WTC11 (cell line): ENCODE measurements at regions of chr16 and their contacts with region 1.

Region 1: DNA sequence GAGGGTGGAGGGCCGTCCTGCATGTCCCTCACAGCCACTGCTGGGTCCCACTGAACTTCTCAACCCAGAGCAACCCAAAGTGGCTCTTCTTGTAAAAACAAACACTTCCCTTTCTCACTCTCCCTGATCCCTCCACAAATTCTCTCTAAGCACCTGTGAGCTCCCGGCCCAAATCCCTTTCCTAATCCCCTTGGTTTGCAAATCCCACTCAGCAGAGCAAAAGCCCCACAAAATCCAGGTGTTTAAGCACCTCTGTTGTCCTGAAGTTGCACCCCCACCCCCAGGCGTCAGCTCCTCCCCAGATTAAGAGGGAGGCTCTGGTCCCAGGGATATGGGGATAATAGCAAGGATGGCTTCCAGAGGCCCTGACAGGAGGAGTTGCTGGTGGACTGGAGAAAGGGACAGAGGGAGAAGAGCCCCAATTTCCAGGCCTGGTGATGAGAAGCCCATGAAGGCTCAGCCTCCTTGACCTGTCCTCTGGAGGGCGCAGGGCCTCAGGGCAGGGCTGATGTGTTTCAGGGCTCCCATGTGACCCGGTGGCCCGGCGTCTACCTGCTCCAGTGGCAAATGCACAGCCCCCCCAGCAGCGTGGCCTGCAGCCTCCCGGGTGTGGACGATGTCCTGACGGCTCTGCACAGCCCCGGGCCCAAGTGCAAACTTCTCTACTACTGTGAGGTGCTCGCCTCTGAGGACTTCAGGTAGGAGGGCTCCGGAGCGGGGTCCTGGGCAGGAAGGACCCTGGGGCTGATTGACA is 23.0 kb downstream of the NAGPA start:
- DNase-seq: peak; percentile 36
- ATAC-seq: peak; percentile 84
- H3K4me3 Mint-ChIP-seq: no peak overlapping the region
- H3K27ac Mint-ChIP-seq: no peak overlapping the region
- H3K4me1 Mint-ChIP-seq: no peaks in the 10 kb centered on the region
- H3K27me3 Mint-ChIP-seq: no peaks in the 10 kb centered on the region; the same call in 1 of the 2 replicates
- CTCF ChIP-seq: no peak

Region 2: DNA sequence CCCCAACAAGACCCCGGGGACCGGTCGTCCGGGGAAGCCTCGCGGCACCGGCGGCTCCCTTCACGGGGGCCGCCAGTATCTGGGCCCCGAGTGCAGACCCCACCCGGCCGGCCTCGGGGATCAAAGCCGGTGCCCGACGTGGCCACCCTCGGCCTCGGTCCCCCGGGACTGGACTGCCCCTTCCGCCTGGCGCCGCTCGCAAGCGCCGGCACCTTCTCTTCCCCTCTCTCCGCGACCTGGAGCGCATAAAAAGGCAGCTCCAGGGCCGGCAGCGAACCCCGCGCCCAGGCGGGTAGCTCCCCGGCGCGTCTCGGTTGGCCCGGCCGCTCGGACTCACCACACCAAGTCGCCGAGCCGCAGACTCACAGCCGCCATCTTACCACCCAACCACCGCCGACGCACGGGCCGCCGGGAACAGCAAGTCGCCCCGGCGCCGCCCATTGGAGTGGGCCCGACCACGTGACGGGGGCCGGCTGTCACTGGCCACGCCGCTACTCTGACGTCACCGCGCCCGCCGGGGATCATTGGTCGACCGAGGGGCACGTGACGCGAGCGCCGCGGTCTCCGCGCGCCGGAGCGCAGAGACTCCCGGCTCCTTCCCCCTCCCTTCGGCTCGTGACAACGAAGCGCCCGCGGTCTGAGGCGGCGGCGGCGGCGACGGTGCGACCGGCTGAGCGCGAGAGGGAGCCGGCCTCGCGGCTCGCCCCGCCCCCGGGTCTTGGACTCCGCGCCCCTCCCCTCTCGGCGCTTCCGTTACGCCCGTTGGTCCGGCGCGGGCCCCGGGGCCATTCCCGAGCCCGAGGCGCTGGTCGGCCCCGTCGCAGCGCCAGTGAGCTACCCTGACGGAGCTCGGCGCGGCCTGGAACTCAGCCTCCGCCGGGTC is 163.6 kb before region 1 on chr16 and contains the starts of genes GLYR1 and UBN1:
- CTCF ChIA-PET with region 1: no interaction called
- POLR2A ChIA-PET with region 1: no interaction called
- DNase-seq: peak; percentile 100
- ATAC-seq: peak; percentile 92
- H3K4me3 Mint-ChIP-seq: peak within 1 kb of the TSS; percentile 84
- H3K27ac Mint-ChIP-seq: peak within 1 kb of the TSS; percentile 83
- H3K4me1 Mint-ChIP-seq: peaks cover 30% of the 10 kb centered on the region
- H3K27me3 Mint-ChIP-seq: no peaks in the 10 kb centered on the region
- CTCF ChIP-seq: no peak
- total RNA-seq, gene GLYR1: 99.7 to 103 TPM (median 99.7 TPM) in 3 replicates
- total RNA-seq, gene UBN1: 35.1 to 38.5 TPM (median 35.9 TPM) in 3 replicates

Region 3: GRCh38 chr16:4976079-4976478 is 34.7 kb before region 1 on chr16:
- CTCF ChIA-PET with region 1: no interaction called
- POLR2A ChIA-PET with region 1: interaction called, 13 read pairs
- DNase-seq: no peak
- ATAC-seq: no peak
- H3K4me3 Mint-ChIP-seq: no peak overlapping the region
- H3K27ac Mint-ChIP-seq: no peak overlapping the region
- H3K4me1 Mint-ChIP-seq: peaks cover 4% of the 10 kb centered on the region; the same call in 1 of the 2 replicates
- H3K27me3 Mint-ChIP-seq: no peaks in the 10 kb centered on the region; the same call in 1 of the 2 replicates
- CTCF ChIP-seq: no peak

Region 4: DNA sequence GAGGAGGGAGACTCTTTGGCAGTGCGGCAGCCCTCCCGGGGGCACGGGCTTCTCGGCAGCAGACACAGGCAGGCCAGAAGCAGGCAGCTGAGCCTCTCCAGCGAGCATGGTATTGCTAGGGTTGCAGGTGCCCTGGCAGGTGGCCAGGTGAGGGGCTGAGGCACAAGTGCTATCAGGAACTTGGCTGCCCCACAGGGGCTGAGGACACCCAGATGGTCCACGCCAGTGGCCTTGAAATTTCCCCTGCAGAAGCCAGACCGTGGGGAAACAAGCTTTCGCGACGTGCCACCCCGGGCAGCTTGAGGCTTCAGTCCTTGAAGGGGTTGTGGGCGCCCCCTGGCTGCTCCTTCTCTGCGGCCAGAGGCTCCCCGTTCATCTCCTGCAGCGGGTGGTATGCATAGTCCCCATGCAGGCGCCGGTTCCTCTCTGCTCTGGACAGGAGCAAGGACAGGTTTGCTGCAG is 14.4 kb after region 1 on chr16:
- CTCF ChIA-PET with region 1: interaction called, 20 read pairs
- POLR2A ChIA-PET with region 1: interaction called, 5 read pairs
- DNase-seq: peak; percentile 85
- ATAC-seq: peak; percentile 93
- H3K4me3 Mint-ChIP-seq: no peak overlapping the region
- H3K27ac Mint-ChIP-seq: no peak overlapping the region
- H3K4me1 Mint-ChIP-seq: no peaks in the 10 kb centered on the region
- H3K27me3 Mint-ChIP-seq: no peaks in the 10 kb centered on the region
- CTCF ChIP-seq: peak; percentile 45; the same call in 1 of the 2 replicates